CD8-positive, alpha-beta T cell (primary cell): ENCODE measurements at regions of chr20 and their contacts with region 1.

Region 1: DNA sequence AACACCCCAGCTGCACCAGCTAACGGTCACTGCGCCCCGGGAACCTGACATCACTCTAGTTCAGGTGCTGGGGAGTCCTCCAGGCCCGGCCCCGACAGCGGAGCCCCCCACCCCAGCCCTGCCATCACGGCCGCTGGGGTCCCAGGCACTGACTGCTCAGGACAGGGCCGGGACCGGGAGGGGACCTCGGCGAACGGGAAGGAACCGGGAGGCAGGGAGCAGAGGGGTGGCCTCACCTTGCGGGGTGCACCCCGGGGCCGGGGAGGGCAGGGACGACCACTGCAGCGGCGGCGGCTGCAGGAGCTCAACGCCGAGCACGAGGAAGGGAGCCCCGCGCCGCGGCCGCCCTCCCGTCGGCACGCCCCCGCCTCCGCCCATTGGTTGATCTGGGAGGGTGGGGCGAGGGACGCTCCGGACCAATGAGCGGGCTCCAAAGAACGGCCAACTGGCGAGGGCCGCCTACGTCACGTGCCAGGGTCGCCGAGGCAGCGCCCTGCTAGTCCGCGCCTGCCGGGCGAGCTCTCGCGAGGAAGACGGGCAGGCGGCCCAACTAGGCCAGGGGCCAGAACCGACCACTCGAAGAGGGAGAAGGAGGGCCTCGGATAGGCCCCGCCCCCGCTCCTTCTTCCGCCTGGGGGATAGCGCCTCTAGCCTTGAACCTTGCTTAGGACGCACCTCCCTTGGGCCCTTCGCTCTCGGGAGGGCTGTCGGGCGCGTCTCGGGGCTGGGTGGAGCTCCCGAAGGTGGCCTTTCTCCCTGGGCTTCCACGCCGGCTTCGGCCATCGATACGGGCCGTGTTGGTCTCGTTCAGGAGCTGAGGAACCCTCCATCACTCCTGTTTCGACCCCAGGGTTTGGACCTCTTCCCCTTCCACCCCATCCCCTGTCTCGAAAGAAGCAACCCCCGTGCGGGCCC is at the start of gene ADISSP:
- DNase-seq: peak; percentile 92 to 98 (median 95)
- ATAC-seq: peak; percentile 80
- H3K4me3 ChIP-seq: peak within 1 kb of the TSS; percentile 91 to 99
- H3K4me3 Mint-ChIP-seq: peak within 1 kb of the TSS; percentile 90
- H3K27ac ChIP-seq: peak within 1 kb of the TSS; percentile 99 to 100
- H3K27ac Mint-ChIP-seq: peak within 1 kb of the TSS; percentile 96
- H3K4me1 ChIP-seq: peaks cover 17% of the 10 kb centered on the region
- H3K4me1 Mint-ChIP-seq: peaks cover 26% of the 10 kb centered on the region
- H3K27me3 ChIP-seq: no peaks in the 10 kb centered on the region
- H3K27me3 Mint-ChIP-seq: peaks cover 4% of the 10 kb centered on the region
- CTCF ChIP-seq: no peak
- total RNA-seq, gene ADISSP: 9.6 to 10.7 TPM

Region 2: GRCh38 chr20:2101865-2102584 is 1665.7 kb before region 1 on chr20:
- CTCF ChIA-PET with region 1: no interaction called
- POLR2A ChIA-PET with region 1: no interaction called
- intact Hi-C with region 1: loop called in 1 of 2 experiments (anchors 5 kb)
- DNase-seq: peak; percentile 79 to 95 (median 91)
- ATAC-seq: peak; percentile 75
- H3K4me3 ChIP-seq: peak overlapping the region; percentile 79 to 100
- H3K4me3 Mint-ChIP-seq: peak overlapping the region; percentile 95
- H3K27ac ChIP-seq: peak overlapping the region; percentile 98 to 100
- H3K27ac Mint-ChIP-seq: peak overlapping the region; percentile 100
- H3K4me1 ChIP-seq: peaks cover 48% of the 10 kb centered on the region
- H3K4me1 Mint-ChIP-seq: peaks cover 41% of the 10 kb centered on the region
- H3K27me3 ChIP-seq: no peaks in the 10 kb centered on the region
- H3K27me3 Mint-ChIP-seq: no peaks in the 10 kb centered on the region
- CTCF ChIP-seq: no peak

Region 3: DNA sequence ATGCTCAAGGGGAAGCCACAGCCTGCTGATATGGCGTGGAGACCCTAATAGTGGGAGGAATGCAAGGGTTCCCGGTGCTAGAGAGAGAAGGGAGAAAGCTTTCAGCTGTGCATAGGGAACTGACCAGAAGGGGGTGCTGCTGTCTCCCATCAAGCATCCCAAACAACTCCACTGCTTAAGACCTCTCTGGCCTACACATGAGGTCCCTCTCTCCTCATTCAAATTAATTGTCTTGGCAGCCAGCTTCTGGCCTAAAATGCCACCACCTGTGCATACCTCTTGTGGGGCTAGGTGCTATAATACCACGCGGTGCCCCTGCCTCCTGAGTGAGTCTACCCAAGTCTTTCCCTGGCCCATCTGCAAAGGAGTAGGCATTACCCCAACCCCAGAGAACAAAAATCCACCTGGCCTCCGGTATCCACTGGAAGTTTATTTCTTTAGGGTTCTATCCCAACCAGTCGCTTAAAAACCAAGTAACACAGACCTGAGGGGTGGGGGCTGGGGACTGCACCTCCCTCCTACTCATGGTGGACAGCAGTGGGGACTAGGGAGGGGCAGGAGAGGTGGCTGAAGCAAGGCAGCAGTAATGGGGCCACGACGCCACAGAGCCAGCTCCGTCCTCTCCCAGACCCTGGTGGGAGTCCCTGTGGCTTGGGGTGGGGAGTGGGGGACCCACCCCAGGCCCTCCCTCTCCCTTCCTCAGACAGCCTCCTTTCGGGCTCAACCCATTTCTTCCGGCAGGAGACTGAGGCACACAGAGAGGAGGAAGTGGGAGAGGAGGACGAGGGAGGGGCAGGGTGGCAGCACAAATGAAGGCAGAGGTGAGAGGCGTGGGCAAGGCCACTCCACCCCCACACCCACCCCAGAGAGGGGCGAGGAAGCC is 14.3 kb before region 1 on chr20:
- CTCF ChIA-PET with region 1: interaction called, 29 read pairs
- POLR2A ChIA-PET with region 1: interaction called, 4 read pairs
- intact Hi-C with region 1: loop called (anchors 1 kb)
- DNase-seq: peak; percentile 37 to 82 (median 67)
- ATAC-seq: peak; percentile 87
- H3K4me3 ChIP-seq: no peak overlapping the region
- H3K4me3 Mint-ChIP-seq: no peak overlapping the region
- H3K27ac ChIP-seq: no peak overlapping the region
- H3K27ac Mint-ChIP-seq: no peak overlapping the region
- H3K4me1 ChIP-seq: no peaks in the 10 kb centered on the region
- H3K4me1 Mint-ChIP-seq: peaks cover 4% of the 10 kb centered on the region
- H3K27me3 ChIP-seq: no peaks in the 10 kb centered on the region
- H3K27me3 Mint-ChIP-seq: no peaks in the 10 kb centered on the region
- CTCF ChIP-seq: peak; percentile 57

Region 4: DNA sequence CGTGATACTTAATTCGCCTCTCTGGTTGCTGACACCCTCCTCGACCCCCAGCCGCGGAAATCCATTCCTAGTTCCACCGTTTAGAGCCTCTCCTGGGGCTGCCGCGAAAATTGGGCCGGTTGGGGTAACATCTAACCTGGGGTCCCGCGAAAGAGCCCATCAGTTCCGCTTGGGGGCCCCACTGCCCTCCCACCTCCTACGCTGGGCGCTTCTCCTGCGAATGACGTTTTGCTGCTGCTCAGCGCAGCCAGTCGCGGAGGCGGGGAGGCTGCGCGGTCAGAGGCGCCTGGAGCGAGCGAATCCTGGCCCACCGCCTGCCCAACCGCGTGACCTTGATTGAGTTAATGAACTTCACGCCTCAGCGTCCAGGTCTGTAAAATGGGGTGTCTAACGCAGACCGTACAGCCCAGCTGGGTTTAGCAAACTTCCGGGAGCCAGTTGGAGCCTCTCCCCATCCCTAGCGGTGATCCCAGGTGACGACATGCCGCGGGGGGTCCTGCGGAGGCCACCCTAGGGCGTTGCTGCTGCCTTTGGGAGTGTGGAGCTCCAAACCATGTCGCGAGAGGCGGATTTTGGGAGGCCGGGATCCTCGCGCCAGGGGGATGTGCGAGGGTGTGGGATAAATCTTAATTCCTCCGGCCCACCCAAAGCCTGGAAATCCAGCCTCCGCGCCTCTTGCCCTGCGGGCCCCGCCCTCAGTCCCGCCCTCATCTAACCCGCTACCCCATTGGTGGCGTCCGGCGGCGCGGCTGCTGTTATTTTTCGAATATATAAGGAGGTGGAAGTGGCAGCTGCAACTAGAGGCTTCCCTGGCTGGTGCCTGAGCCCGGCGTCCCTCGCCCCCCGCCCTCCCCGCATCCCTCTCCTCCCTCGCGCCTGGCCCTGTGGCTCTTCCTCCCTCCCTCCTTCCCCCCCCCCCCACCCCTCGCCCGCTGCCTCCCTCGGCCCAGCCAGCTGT is 28.1 kb after region 1 on chr20 and contains the start of gene CDC25B:
- CTCF ChIA-PET with region 1: interaction called, 3 read pairs
- POLR2A ChIA-PET with region 1: interaction called, 7 read pairs
- intact Hi-C with region 1: loop called in 1 of 2 experiments (anchors 1 kb)
- DNase-seq: peak; percentile 80 to 94 (median 92)
- ATAC-seq: peak; percentile 77
- H3K4me3 ChIP-seq: peak within 1 kb of the TSS; percentile 95 to 98
- H3K4me3 Mint-ChIP-seq: peak within 1 kb of the TSS; percentile 98
- H3K27ac ChIP-seq: peak within 1 kb of the TSS; percentile 95 to 99
- H3K27ac Mint-ChIP-seq: peak within 1 kb of the TSS; percentile 98
- H3K4me1 ChIP-seq: peaks cover 37% of the 10 kb centered on the region
- H3K4me1 Mint-ChIP-seq: peaks cover 42% of the 10 kb centered on the region
- H3K27me3 ChIP-seq: no peaks in the 10 kb centered on the region
- H3K27me3 Mint-ChIP-seq: no peaks in the 10 kb centered on the region
- CTCF ChIP-seq: peak; percentile 60
- total RNA-seq, gene CDC25B: 135 to 140 TPM

Region 5: DNA sequence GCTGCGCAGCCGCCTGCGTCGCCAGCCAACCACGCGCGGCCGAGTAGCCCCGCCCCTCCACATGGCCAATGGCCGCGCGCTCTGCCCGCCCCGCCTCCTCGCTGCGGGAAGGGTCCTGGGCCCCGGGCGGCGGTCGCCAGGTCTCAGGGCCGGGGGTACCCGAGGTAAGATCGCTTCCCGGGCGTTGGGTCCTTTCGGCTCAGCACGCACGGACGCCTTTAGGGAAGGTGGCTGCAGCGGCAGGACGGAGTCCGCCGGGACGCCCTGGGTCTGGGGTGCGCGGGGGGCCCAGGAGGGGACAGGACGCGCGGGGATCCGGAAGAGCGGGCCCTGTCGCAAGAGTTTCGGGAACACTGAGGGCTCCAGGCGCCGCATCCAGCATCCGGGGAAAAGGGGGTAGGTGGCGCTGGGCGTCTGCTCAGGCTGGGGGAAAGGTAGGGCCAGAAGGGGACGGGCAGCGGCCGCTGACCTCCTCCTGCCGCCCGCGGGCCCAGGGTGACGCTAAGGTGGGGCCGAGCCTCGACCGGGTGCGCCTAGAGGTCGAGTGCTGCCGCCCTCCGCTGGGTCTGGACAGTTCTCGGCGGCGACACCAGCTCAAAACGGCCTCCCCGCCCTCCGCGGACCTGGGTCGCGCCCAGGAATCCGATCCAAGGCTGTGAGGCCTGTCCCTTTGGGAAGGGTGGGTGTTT is 79.2 kb after region 1 on chr20 and contains the start of gene MAVS:
- CTCF ChIA-PET with region 1: no interaction called
- POLR2A ChIA-PET with region 1: interaction called, 6 read pairs
- intact Hi-C with region 1: loop called (anchors 1 to 5 kb)
- DNase-seq: peak; percentile 67 to 92 (median 85)
- ATAC-seq: peak; percentile 97
- H3K4me3 ChIP-seq: peak within 1 kb of the TSS; percentile 76 to 87
- H3K4me3 Mint-ChIP-seq: peak within 1 kb of the TSS; percentile 87
- H3K27ac ChIP-seq: peak within 1 kb of the TSS; percentile 60 to 79
- H3K27ac Mint-ChIP-seq: peak within 1 kb of the TSS; percentile 82
- H3K4me1 ChIP-seq: peaks cover 10% of the 10 kb centered on the region
- H3K4me1 Mint-ChIP-seq: peaks cover 33% of the 10 kb centered on the region
- H3K27me3 ChIP-seq: no peaks in the 10 kb centered on the region
- H3K27me3 Mint-ChIP-seq: no peaks in the 10 kb centered on the region
- CTCF ChIP-seq: no peak
- total RNA-seq, gene MAVS: 10.0 to 10.5 TPM

Region 6: GRCh38 chr20:4014031-4014474 is 246.4 kb after region 1 on chr20:
- CTCF ChIA-PET with region 1: no interaction called
- POLR2A ChIA-PET with region 1: no interaction called
- intact Hi-C with region 1: loop called in 1 of 2 experiments (anchors 5 kb)
- DNase-seq: peak in 5 of 9 experiments; percentile 19 to 65 (median 34)
- ATAC-seq: no peak
- H3K4me3 ChIP-seq: peak overlapping the region in 1 of 2 experiments; percentile 3
- H3K4me3 Mint-ChIP-seq: peak overlapping the region; percentile 88
- H3K27ac ChIP-seq: peak overlapping the region in 1 of 2 experiments; percentile 23
- H3K27ac Mint-ChIP-seq: peak overlapping the region; percentile 4
- H3K4me1 ChIP-seq: peaks cover 17% of the 10 kb centered on the region
- H3K4me1 Mint-ChIP-seq: peaks cover 34% of the 10 kb centered on the region
- H3K27me3 ChIP-seq: no peaks in the 10 kb centered on the region
- H3K27me3 Mint-ChIP-seq: no peaks in the 10 kb centered on the region
- CTCF ChIP-seq: peak; percentile 35